A673 (cell line): ENCODE measurements at regions of chr1 and their contacts with region 1.

Region 1: DNA sequence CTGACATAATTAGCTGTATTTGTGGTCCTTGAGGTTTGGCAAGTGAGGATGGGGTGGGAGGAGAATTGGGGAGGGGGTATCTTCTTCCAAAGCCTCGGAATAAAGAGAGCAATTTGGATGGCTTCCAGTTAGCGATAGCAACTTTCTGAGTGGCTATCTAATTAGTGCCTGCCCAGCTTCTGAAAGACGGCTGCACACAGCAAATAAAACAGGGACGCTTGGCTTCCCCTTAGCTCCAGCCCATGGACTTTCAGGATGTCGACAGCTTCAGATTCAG is 31.1 kb downstream of the KLHDC7A start:
- DNase-seq: no peak
- H3K4me3 ChIP-seq: no peak overlapping the region
- H3K27ac ChIP-seq: no peak overlapping the region
- H3K4me1 ChIP-seq: no peaks in the 10 kb centered on the region
- H3K27me3 ChIP-seq: no peaks in the 10 kb centered on the region
- CTCF ChIP-seq: no peak

Region 2: GRCh38 chr1:18412882-18413353 is 98.9 kb before region 1 on chr1:
- CTCF ChIA-PET with region 1: interaction called, 10 read pairs
- POLR2A ChIA-PET with region 1: no interaction called
- intact Hi-C with region 1: no loop called
- DNase-seq: no peak
- H3K4me3 ChIP-seq: no peak overlapping the region
- H3K27ac ChIP-seq: no peak overlapping the region
- H3K4me1 ChIP-seq: no peaks in the 10 kb centered on the region
- H3K27me3 ChIP-seq: no peaks in the 10 kb centered on the region
- CTCF ChIP-seq: no peak

Region 3: GRCh38 chr1:18429654-18430053 is 82.2 kb before region 1 on chr1:
- CTCF ChIA-PET with region 1: no interaction called
- POLR2A ChIA-PET with region 1: no interaction called
- intact Hi-C with region 1: no loop called
- DNase-seq: no peak
- H3K4me3 ChIP-seq: no peak overlapping the region
- H3K27ac ChIP-seq: no peak overlapping the region
- H3K4me1 ChIP-seq: no peaks in the 10 kb centered on the region
- H3K27me3 ChIP-seq: peaks cover 6% of the 10 kb centered on the region
- CTCF ChIP-seq: no peak

Region 4: DNA sequence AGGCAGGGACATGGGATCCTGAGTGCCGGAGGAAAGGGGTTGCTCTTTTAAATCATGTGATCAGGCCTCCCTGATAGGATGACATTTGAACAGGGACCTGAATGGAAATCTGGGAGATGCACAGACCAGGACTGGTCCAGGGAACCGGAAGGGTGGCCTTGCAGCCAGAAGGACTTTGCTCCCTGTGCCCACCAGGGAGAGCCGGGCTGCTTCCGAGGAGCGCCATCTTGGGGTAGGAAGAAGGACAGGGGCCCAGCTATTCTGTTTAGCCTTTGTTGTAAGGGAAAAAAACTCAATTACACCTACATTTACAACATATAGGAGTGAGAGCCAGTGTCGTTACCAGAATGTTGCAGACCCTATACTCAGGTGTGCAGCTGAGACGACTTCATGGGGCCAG is 25.6 kb before region 1 on chr1:
- CTCF ChIA-PET with region 1: no interaction called
- POLR2A ChIA-PET with region 1: no interaction called
- intact Hi-C with region 1: no loop called
- DNase-seq: peak; percentile 21
- H3K4me3 ChIP-seq: no peak overlapping the region
- H3K27ac ChIP-seq: no peak overlapping the region
- H3K4me1 ChIP-seq: no peaks in the 10 kb centered on the region
- H3K27me3 ChIP-seq: peaks cover 2% of the 10 kb centered on the region
- CTCF ChIP-seq: peak; percentile 59